ENCODE measurements at regions of chr21 and their contacts with region 1.

Region 1: GRCh38 chr21:16159213-16159970 is 429.6 kb downstream of the USP25 start:
- DNase-seq: no peak
- ATAC-seq: no peak
- H3K4me3 ChIP-seq: no peak overlapping the region
- H3K27ac ChIP-seq: no peak overlapping the region
- H3K4me1 ChIP-seq: no peaks in the 10 kb centered on the region
- H3K27me3 ChIP-seq: no peaks in the 10 kb centered on the region
- CTCF ChIP-seq: no peak

Region 2: GRCh38 chr21:15976807-15977206 is 182.6 kb before region 1 on chr21:
- intact Hi-C with region 1: loop called in 1 of 10 experiments (anchors 5 kb)
- DNase-seq: no peak
- ATAC-seq: no peak
- H3K4me3 ChIP-seq: no peak overlapping the region
- H3K27ac ChIP-seq: no peak overlapping the region
- H3K4me1 ChIP-seq: no peaks in the 10 kb centered on the region
- H3K27me3 ChIP-seq: no peaks in the 10 kb centered on the region
- CTCF ChIP-seq: peak in 3 of 9 donors; percentile 7 to 22 (median 19)

Region 3: DNA sequence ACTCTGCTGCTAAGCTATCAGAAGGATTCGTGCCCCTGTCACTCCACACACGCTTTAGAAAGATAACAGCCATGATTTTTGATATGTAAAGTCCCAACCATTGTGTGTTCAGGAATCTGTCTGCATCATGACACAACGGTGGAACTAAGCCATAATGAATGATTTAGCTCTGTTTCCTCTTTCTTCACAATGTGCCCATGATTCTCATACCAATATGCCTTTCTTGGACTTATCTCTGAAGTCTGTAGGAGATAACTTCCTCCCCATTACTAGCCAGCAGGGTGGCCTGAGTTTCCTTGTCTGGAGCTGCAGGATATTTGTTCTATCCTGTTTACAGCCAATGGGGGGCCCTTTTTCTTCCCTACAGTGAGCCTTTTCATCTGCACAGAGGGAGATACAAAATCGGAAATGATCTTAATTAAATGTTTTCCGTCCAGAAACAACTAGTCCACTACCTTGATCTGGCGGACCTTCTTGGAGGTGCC is 82.1 kb after region 1 on chr21:
- intact Hi-C with region 1: no loop called
- DNase-seq: no peak
- ATAC-seq: no peak
- H3K4me3 ChIP-seq: no peak overlapping the region
- H3K27ac ChIP-seq: no peak overlapping the region
- H3K4me1 ChIP-seq: no peaks in the 10 kb centered on the region
- H3K27me3 ChIP-seq: no peaks in the 10 kb centered on the region
- CTCF ChIP-seq: no peak

Region 4: DNA sequence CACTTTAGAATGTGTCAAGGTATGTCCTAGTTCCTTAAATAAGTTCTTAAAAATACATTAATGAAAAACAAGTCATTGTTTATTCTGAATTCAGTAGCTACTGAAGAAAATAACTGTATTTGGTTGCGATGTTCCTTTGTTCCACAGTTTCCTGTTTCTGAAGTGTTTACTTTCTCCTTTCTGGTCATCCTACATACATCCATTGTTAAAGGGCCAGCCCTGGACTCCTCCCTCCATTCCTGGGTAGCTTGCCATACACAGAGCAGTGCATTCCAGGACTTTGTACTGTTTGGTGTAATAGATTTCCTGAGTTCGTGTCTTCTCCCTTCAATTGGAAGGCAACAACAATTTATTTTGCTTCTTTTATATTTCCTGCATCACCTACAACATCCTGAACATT is 508.0 kb after region 1 on chr21:
- intact Hi-C with region 1: no loop called
- DNase-seq: no peak
- ATAC-seq: no peak
- H3K4me3 ChIP-seq: no peak overlapping the region
- H3K27ac ChIP-seq: no peak overlapping the region
- H3K4me1 ChIP-seq: no peaks in the 10 kb centered on the region
- H3K27me3 ChIP-seq: no peaks in the 10 kb centered on the region
- CTCF ChIP-seq: no peak